ENCODE measurements at regions of chr6 and their contacts with region 1.

Region 1: DNA sequence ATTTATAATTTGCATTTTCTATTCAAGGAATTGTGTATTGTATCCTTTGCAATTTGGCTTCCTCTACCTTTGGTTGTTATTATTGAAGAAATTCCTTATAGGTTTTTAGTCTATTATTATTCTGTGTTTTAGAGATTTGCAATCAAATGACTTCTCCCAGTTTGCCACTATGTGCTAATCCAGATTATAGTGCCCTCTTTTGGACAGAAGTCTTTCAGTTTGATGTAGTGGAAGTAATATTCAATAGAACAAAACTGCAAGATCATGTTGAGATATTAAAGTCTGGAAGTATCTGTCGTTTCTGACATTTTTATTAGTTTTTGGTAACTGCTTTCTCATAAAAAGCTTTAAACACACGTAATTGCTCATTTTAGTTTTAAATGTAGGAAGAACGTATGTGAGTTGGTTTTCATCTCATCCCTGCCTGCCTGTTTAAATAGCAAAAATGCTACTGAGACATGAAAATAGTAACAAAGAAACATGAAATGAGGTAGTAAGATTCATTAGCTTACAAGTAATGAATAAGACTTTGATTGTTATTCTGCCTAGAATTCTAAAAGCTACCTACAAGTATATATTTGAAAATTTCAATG is 72.8 kb downstream of the RTN4IP1 start:
- DNase-seq: peak in 6 of 9 donors; percentile 25 to 61 (median 49)
- ATAC-seq: peak; percentile 64
- H3K4me3 ChIP-seq: no peak overlapping the region
- H3K4me3 Mint-ChIP-seq: no peak overlapping the region
- H3K27ac ChIP-seq: no peak overlapping the region
- H3K27ac Mint-ChIP-seq: peak overlapping the region in 4 of 9 donors; percentile 1 to 56 (median 33)
- H3K4me1 ChIP-seq: no peaks in the 10 kb centered on the region
- H3K4me1 Mint-ChIP-seq: peaks cover 0 to 21% (median 6%) of the 10 kb centered on the region in 7 donors
- H3K27me3 ChIP-seq: no peaks in the 10 kb centered on the region
- H3K27me3 Mint-ChIP-seq: no peaks in the 10 kb centered on the region

Region 2: DNA sequence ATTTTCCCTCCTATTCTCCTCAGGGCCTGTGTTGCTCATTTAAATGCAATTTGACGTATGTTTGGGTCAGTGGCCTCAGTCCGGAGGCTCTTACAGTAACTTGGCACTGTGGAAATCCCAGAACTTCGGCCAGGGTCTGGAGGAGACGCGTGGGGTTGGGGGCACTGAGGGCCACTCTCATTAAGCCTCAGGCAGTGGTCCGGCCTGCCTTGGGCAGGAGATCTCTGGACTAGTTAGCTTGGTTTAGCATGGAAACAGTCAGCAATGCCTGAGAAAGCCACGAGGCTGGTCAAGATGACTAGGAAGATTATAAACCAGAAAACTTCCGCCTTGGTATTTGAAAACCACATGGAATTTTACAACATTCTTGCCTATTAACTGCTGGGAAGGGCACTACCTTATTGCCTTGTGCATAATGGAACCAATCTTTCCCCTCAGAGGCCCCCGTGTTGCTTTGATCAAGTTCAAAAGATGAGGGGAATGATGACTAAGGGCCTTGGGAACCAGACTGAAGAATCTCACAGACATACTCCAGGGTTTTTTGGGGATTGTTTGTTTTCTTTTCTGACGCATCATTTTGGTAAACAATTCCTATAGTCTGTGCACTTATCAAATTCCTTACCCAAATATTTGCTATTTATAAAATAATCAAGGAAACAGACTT is 947.6 kb before region 1 on chr6:
- CTCF ChIA-PET with region 1: no interaction called
- POLR2A ChIA-PET with region 1: no interaction called
- intact Hi-C with region 1: no loop called
- DNase-seq: no peak
- ATAC-seq: no peak
- H3K4me3 ChIP-seq: no peak overlapping the region
- H3K4me3 Mint-ChIP-seq: no peak overlapping the region
- H3K27ac ChIP-seq: no peak overlapping the region
- H3K27ac Mint-ChIP-seq: no peak overlapping the region
- H3K4me1 ChIP-seq: no peaks in the 10 kb centered on the region
- H3K4me1 Mint-ChIP-seq: peaks cover 0 to 6% (median 0%) of the 10 kb centered on the region in 7 donors
- H3K27me3 ChIP-seq: no peaks in the 10 kb centered on the region
- H3K27me3 Mint-ChIP-seq: peaks cover 5 to 22% (median 11%) of the 10 kb centered on the region in 5 donors

Region 3: GRCh38 chr6:106339334-106340029 is 217.0 kb before region 1 on chr6:
- CTCF ChIA-PET with region 1: no interaction called
- POLR2A ChIA-PET with region 1: no interaction called
- intact Hi-C with region 1: loop called in 1 of 2 experiments (anchors 2 kb)
- DNase-seq: peak in 8 of 9 donors; percentile 19 to 50 (median 35)
- ATAC-seq: peak; percentile 88
- H3K4me3 ChIP-seq: no peak overlapping the region
- H3K4me3 Mint-ChIP-seq: peak overlapping the region in 7 of 10 donors; percentile 15 to 67 (median 44)
- H3K27ac ChIP-seq: no peak overlapping the region
- H3K27ac Mint-ChIP-seq: no peak overlapping the region
- H3K4me1 ChIP-seq: no peaks in the 10 kb centered on the region
- H3K4me1 Mint-ChIP-seq: peaks cover 0 to 9% (median 6%) of the 10 kb centered on the region in 7 donors
- H3K27me3 ChIP-seq: no peaks in the 10 kb centered on the region
- H3K27me3 Mint-ChIP-seq: peaks cover 14 to 44% (median 20%) of the 10 kb centered on the region in 5 donors

Region 4: GRCh38 chr6:106360410-106360988 is 196.0 kb before region 1 on chr6 and contains the start of gene CRYBG1:
- CTCF ChIA-PET with region 1: no interaction called
- POLR2A ChIA-PET with region 1: no interaction called
- intact Hi-C with region 1: loop called in 1 of 2 experiments (anchors 10 kb)
- DNase-seq: peak; percentile 60 to 75 (median 72)
- ATAC-seq: peak; percentile 95
- H3K4me3 ChIP-seq: peak within 1 kb of the TSS; percentile 45
- H3K4me3 Mint-ChIP-seq: peak within 1 kb of the TSS; percentile 71 to 86 (median 78)
- H3K27ac ChIP-seq: no peak within 1 kb of the TSS
- H3K27ac Mint-ChIP-seq: peak within 1 kb of the TSS in 2 of 9 donors; percentile 15 to 43
- H3K4me1 ChIP-seq: peaks cover 7 to 8% of the 10 kb centered on the region in 2 donors
- H3K4me1 Mint-ChIP-seq: peaks cover 5 to 15% (median 10%) of the 10 kb centered on the region in 7 donors
- H3K27me3 ChIP-seq: peaks cover 3 to 20% of the 10 kb centered on the region in 2 donors
- H3K27me3 Mint-ChIP-seq: peaks cover 34 to 62% (median 55%) of the 10 kb centered on the region in 5 donors
- total RNA-seq, gene CRYBG1: 18.0 to 39.8 (median 34.6) TPM

Region 5: GRCh38 chr6:106525111-106525881 is 31.2 kb before region 1 on chr6:
- CTCF ChIA-PET with region 1: interaction called, 3 read pairs
- POLR2A ChIA-PET with region 1: interaction called, 3 read pairs
- intact Hi-C with region 1: loop called (anchors 1 to 2 kb)
- DNase-seq: peak in 7 of 9 donors; percentile 43 to 65 (median 57)
- ATAC-seq: peak; percentile 21
- H3K4me3 ChIP-seq: peak overlapping the region; percentile 57
- H3K4me3 Mint-ChIP-seq: peak overlapping the region; percentile 80 to 96 (median 91)
- H3K27ac ChIP-seq: peak overlapping the region; percentile 86
- H3K27ac Mint-ChIP-seq: peak overlapping the region; percentile 92 to 98 (median 94)
- H3K4me1 ChIP-seq: peaks cover 11 to 13% of the 10 kb centered on the region in 2 donors
- H3K4me1 Mint-ChIP-seq: peaks cover 24 to 79% (median 63%) of the 10 kb centered on the region in 7 donors
- H3K27me3 ChIP-seq: no peaks in the 10 kb centered on the region
- H3K27me3 Mint-ChIP-seq: no peaks in the 10 kb centered on the region

Measured in naive thymus-derived CD4-positive, alpha-beta T cell (primary cell).